ENCODE measurements at regions of chr14 and their contacts with region 1.

Region 1: GRCh38 chr14:50532502-50533240 is at the start of gene MAP4K5:
- DNase-seq: peak; percentile 81 to 87
- ATAC-seq: peak; percentile 95
- H3K4me3 ChIP-seq: peak within 1 kb of the TSS; percentile 83 to 88 (median 85)
- H3K27ac ChIP-seq: peak within 1 kb of the TSS; percentile 86 to 95 (median 94)
- H3K4me1 ChIP-seq: peaks cover 21 to 29% of the 10 kb centered on the region in 2 donors
- H3K27me3 ChIP-seq: no peaks in the 10 kb centered on the region
- CTCF ChIP-seq: peak; percentile 85 to 96 (median 93)
- POLR2A ChIP-seq: peak; percentile 82 to 87
- total RNA-seq, gene MAP4K5: 35.3 to 63.9 (median 47.1) TPM

Region 2: DNA sequence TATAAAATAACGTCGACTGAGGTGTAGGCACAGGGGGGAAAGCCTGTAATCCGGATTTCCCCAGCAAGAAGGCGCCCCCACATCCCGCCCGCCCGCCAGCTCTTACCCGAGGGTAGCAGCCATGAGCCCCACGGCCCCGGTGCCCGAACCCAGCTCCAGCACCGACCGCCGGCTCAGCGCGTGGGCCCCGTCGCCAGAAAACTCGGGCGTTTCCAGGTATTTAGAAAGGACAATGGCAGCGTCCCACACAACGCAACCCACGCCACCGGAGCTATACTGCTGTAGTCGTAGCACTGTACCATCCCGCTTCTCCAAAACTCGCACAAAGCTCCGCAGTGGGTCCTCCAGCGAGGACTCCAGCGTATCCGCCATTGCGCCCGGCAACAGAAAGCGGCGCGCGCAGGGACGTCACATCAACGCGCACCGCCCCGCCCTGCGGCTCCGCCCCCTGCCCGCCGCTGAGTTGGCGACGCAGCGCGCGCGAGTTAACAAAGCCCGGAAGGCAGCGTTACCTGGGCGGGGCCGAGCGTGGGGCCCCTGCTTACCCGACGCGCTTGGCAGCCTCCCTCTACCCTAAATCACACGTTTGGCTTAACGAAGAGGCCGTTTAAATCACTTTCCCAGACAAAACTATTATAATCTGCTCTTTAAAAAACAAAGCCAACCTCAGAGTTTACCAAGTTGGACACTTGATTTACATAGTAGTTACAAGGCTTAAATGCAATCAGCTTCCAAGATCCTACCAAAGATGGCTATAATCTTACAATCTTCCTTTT is 416.3 kb before region 1 on chr14 and contains the start of gene VCPKMT:
- in situ Hi-C with region 1: no loop called
- intact Hi-C with region 1: loop called (anchors 2 kb)
- DNase-seq: peak; percentile 82 to 90
- ATAC-seq: peak; percentile 94 to 95
- H3K4me3 ChIP-seq: peak within 1 kb of the TSS; percentile 75 to 87 (median 82)
- H3K27ac ChIP-seq: peak within 1 kb of the TSS; percentile 86 to 92 (median 90)
- H3K4me1 ChIP-seq: peaks cover 14% of the 10 kb centered on the region in 2 donors
- H3K27me3 ChIP-seq: no peaks in the 10 kb centered on the region
- CTCF ChIP-seq: peak in 1 of 5 experiments; percentile 7
- POLR2A ChIP-seq: peak; percentile 77 to 86
- total RNA-seq, gene VCPKMT: 2.2 to 7.3 (median 4.9) TPM

Region 3: DNA sequence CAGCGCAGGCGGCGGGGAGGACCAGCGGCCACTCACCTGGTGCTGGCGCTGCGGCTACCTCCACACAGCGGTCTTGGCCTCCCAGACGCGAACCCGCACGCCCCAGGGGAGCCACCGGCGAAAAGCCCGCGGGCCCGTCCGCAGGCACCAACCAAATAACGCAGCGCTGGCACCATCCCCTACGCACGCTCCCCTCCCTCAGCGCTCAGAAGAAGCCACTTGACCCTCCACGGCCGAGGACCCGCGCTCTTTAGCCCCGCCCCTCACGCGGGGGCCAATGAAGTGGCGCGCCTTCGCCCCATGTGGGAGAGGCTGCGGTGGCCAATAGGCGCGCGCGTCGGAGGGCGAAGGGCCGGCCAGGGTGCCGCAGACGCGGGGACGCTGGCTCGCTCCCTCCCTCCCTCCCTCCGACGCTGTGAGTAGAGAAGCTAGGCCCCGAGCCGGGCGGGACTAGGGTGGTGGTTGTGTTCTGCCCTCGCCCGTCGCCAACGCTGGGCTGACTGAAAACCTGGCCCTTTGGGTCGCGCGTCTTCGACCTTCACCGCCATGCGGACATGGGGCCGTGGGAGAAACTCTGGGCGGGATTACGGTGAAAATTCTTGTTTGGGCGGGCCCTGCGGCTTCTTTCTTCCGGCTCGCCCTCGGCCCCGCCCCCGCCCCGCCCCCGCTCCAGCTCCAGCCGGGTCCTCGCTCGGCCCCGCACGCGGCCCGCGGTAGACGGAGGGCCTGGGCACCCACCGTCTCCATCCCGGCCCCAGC is 220.5 kb before region 1 on chr14 and contains the starts of genes DMAC2L and L2HGDH:
- in situ Hi-C with region 1: no loop called
- intact Hi-C with region 1: loop called (anchors 2 kb)
- DNase-seq: peak; percentile 85 to 92
- ATAC-seq: peak; percentile 91 to 95
- H3K4me3 ChIP-seq: peak within 1 kb of the TSS; percentile 61 to 92 (median 86)
- H3K27ac ChIP-seq: peak within 1 kb of the TSS; percentile 94 to 98 (median 96)
- H3K4me1 ChIP-seq: peaks cover 18% of the 10 kb centered on the region in 2 donors
- H3K27me3 ChIP-seq: no peaks in the 10 kb centered on the region
- CTCF ChIP-seq: peak in 3 of 5 experiments; percentile 10 to 78 (median 34)
- POLR2A ChIP-seq: peak; percentile 79 to 83
- total RNA-seq, gene DMAC2L: 18.6 to 42.2 (median 24.6) TPM
- total RNA-seq, gene L2HGDH: 8.6 to 13.4 (median 10.9) TPM

Region 4: DNA sequence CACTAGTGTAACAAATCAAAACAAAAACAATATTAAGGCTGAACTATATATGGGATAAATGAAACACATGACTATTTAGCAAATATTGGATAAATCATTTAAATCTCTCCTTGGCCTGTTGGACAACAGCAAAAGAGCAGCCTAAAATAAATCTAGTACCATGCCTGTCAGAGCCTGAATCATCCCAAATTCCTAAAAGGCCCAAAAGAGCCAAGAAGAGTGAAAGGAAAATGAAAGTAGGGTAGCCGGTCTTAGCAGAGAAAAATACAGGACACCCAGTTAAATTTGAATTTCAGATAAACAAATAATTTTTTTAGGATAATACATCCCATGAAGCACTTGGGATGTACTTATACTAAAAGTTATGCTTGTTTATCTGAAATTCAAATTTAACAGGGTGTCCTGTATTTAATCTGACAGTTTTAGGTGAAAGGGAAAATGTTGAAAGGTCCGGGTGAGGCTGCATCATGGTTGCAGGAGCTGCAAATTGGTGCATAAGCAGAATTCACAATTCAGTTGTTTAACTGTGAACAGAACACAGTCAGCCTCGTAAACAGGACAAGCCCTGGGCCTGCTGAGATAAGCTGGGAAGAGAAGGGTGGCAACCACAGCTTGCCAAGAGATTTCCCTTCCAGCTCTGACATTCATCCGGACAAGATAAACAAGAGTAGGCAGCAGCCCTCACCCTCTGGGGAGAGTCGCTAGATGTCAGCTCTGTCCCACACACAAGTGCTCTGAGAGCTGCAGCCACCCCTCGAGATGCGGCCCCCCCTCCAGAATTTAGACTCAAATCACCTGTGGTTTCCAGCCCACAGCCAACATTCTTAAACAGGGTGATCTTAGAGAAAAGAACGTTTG is 190.2 kb before region 1 on chr14:
- in situ Hi-C with region 1: no loop called
- intact Hi-C with region 1: loop called (anchors 5 kb)
- DNase-seq: peak; percentile 21 to 47
- ATAC-seq: peak; percentile 70 to 78
- H3K4me3 ChIP-seq: peak overlapping the region; percentile 0 to 36 (median 16)
- H3K27ac ChIP-seq: peak overlapping the region; percentile 2 to 63 (median 30)
- H3K4me1 ChIP-seq: peaks cover 8 to 25% of the 10 kb centered on the region in 2 donors
- H3K27me3 ChIP-seq: no peaks in the 10 kb centered on the region
- CTCF ChIP-seq: peak in 2 of 5 experiments; percentile 23 to 38
- POLR2A ChIP-seq: no peak

Region 5: DNA sequence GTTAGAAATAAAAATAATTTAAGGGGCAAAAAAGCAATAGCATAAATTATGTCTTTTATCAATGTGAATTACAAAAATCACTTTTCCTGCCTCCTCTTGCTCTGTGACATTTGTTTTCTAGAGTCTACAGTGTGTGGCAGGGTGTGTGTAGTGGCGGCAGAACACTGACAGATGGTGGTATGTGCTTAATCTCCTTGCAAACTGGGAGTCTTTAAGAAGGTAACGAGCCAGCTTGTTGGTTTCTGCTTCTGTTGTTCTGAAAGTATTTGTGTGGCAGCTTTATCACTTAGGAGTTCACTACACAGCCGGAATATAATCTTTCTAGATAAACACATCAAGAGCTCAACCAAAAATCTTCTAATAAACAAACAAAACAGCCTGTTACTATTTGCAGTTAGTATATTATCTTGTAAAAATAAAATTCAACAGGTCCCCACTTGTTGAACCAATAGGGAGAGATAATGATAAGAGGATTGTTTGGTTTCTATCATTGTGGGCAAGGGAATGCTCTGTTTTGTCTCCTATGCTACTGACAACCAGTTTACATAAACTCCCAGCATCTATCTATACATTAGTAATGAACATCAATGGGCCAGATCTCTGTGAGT is 148.9 kb before region 1 on chr14:
- in situ Hi-C with region 1: no loop called
- intact Hi-C with region 1: no loop called
- DNase-seq: no peak
- ATAC-seq: no peak
- H3K4me3 ChIP-seq: no peak overlapping the region
- H3K27ac ChIP-seq: no peak overlapping the region
- H3K4me1 ChIP-seq: no peaks in the 10 kb centered on the region
- H3K27me3 ChIP-seq: no peaks in the 10 kb centered on the region
- CTCF ChIP-seq: no peak
- POLR2A ChIP-seq: no peak

Region 6: GRCh38 chr14:50667996-50668825 is 135.5 kb after region 1 on chr14 and contains the start of gene SAV1:
- in situ Hi-C with region 1: no loop called
- intact Hi-C with region 1: loop called (anchors 5 kb)
- DNase-seq: peak; percentile 72 to 82
- ATAC-seq: peak; percentile 87 to 90
- H3K4me3 ChIP-seq: peak within 1 kb of the TSS; percentile 65 to 95 (median 80)
- H3K27ac ChIP-seq: peak within 1 kb of the TSS; percentile 89 to 97 (median 96)
- H3K4me1 ChIP-seq: peaks cover 27 to 29% of the 10 kb centered on the region in 2 donors
- H3K27me3 ChIP-seq: no peaks in the 10 kb centered on the region
- CTCF ChIP-seq: peak in 1 of 5 experiments; percentile 7
- POLR2A ChIP-seq: peak; percentile 93 to 94
- total RNA-seq, gene SAV1: 18.3 to 68.7 (median 36.8) TPM

Measured in gastrocnemius medialis (tissue), 4 donors.